ENCODE measurements at regions of chr18 and their contacts with region 1.

Region 1: GRCh38 chr18:7272311-7273049 is 41.6 kb downstream of the LRRC30 start:
- DNase-seq: peak; percentile 56
- H3K4me3 ChIP-seq: no peak overlapping the region
- H3K27ac ChIP-seq: no peak overlapping the region
- H3K4me1 ChIP-seq: peaks cover 5% of the 10 kb centered on the region
- H3K27me3 ChIP-seq: no peaks in the 10 kb centered on the region
- CTCF ChIP-seq: peak; percentile 55 to 73

Region 2: DNA sequence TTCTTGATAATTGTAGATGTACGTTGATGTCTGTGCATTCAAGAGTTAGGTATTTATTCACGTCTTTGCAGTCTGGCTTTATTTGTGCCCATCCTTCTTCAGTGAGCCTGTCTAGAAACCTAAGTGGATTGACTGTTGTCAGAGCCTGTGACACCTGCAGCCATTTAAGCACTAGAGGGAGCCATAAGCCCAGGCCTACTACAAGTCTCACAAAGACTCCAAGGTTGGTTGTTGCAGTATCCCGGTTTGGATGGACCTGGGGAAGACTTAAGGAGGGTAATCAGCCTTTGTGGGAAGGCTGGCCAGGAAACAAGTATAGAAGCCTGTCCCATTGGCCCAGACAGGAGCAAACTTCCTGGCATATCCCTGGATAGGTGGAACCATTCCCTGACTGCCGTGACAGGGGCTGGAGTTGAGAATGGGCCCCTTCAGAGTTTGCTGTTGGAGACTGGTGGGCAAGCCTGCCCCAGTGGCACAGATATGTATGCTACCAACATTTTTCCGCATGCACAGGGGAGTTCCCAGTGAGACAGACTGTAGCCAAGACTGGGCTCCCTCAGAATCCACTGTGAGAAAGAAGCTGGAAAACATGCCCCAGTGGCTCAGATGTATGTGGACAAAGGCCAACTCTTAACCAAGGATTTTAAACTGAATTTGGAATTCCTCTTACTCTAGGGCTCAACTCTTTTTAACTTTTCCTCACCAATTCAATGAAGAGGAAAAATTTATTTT is 50.9 kb before region 1 on chr18:
- CTCF ChIA-PET with region 1: no interaction called
- dilution Hi-C with region 1: no loop called
- in situ Hi-C with region 1: no loop called
- intact Hi-C with region 1: loop called (anchors 1 kb)
- DNase-seq: peak; percentile 58
- H3K4me3 ChIP-seq: no peak overlapping the region
- H3K27ac ChIP-seq: no peak overlapping the region
- H3K4me1 ChIP-seq: no peaks in the 10 kb centered on the region
- H3K27me3 ChIP-seq: no peaks in the 10 kb centered on the region
- CTCF ChIP-seq: peak; percentile 94 to 96

Region 3: GRCh38 chr18:7325126-7325430 is 52.6 kb after region 1 on chr18:
- CTCF ChIA-PET with region 1: no interaction called
- dilution Hi-C with region 1: no loop called
- in situ Hi-C with region 1: no loop called
- intact Hi-C with region 1: no loop called
- DNase-seq: peak; percentile 78
- H3K4me3 ChIP-seq: no peak overlapping the region
- H3K27ac ChIP-seq: no peak overlapping the region
- H3K4me1 ChIP-seq: peaks cover 28% of the 10 kb centered on the region
- H3K27me3 ChIP-seq: no peaks in the 10 kb centered on the region
- CTCF ChIP-seq: no peak

Region 4: DNA sequence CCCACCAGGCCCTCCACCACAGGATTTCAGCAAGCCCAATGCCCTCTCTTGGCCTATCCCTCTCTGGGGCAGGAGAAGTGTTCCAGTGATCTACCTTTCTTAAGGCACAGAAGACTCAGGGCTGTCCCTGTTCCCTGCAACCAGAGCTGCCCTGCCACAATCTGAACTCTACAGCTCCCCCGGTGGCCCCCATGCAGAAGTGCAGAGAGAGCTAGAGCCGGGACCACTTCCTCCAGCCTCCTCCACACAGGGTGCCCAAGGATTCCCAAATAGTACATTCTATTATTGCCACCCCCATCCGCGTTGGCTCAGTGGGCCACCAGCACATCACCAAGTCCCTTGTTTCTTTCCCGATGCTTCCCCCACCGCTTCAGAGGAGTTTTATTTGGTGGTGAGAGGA is 179.9 kb after region 1 on chr18:
- CTCF ChIA-PET with region 1: interaction called, 4 read pairs
- dilution Hi-C with region 1: no loop called
- in situ Hi-C with region 1: no loop called
- intact Hi-C with region 1: loop called (anchors 2 kb)
- DNase-seq: peak; percentile 26
- H3K4me3 ChIP-seq: no peak overlapping the region
- H3K27ac ChIP-seq: no peak overlapping the region
- H3K4me1 ChIP-seq: no peaks in the 10 kb centered on the region
- H3K27me3 ChIP-seq: no peaks in the 10 kb centered on the region
- CTCF ChIP-seq: peak; percentile 73

Region 5: DNA sequence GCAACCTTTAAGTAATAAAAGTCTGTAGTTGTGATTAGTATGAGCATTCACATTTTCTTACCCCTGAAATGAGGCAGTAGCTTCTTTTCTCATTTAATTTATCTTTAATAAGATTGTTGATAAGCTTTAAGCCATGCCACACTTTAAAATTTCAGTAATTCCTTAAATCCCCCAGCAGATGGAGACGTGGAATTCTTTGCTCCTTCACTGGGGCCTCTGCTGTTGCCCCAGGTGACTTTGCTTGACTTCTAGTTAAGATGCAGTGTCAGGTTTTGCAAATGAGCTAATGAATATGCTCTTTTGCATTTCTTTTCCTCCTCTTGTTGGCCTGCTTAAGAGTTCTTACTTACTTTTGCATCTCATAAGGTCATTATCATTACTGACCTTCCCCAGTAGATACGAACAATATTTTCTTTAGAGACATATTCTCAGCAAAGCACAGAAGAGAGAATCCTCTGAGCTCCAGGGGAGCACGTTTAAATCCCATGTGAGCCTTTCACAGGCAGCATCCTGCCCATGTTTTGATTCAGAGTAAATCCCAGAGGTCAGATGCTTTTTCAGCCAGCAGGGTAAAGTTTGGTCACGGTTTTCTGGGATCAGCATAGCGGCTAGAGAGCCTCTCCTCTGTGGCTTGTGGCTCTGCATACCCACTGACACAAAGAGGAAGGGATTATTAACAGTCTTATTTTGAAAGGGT is 517.5 kb after region 1 on chr18:
- CTCF ChIA-PET with region 1: interaction called, 6 read pairs
- dilution Hi-C with region 1: no loop called
- in situ Hi-C with region 1: no loop called
- intact Hi-C with region 1: loop called (anchors 10 kb)
- DNase-seq: peak; percentile 37
- H3K4me3 ChIP-seq: no peak overlapping the region
- H3K27ac ChIP-seq: no peak overlapping the region
- H3K4me1 ChIP-seq: no peaks in the 10 kb centered on the region
- H3K27me3 ChIP-seq: no peaks in the 10 kb centered on the region
- CTCF ChIP-seq: peak; percentile 50 to 68

Region 6: DNA sequence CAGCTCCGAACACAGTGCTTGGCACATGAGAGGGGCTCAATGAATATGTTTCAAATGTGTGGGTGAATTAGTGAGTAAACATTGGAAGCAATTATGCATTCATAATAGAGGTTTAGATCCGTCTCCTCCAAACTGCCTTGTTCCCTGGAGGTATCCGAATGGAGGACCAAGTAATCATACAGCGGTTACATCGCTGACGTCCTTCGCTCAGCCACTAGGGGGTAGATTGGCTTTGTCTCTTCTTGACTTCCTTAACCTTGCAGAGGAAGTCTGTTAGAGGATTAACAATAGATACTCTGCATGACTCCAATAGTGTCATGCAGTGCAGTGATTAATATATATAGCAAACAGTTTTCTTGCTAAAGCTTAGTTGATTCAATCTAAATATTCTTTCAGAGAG is 811.7 kb after region 1 on chr18:
- CTCF ChIA-PET with region 1: no interaction called
- dilution Hi-C with region 1: no loop called
- in situ Hi-C with region 1: no loop called
- intact Hi-C with region 1: loop called (anchors 5 kb)
- DNase-seq: peak; percentile 46
- H3K4me3 ChIP-seq: no peak overlapping the region
- H3K27ac ChIP-seq: no peak overlapping the region
- H3K4me1 ChIP-seq: no peaks in the 10 kb centered on the region
- H3K27me3 ChIP-seq: no peaks in the 10 kb centered on the region
- CTCF ChIP-seq: peak; percentile 66 to 70

Region 7: GRCh38 chr18:8478166-8478967 is 1205.9 kb after region 1 on chr18:
- CTCF ChIA-PET with region 1: interaction called, 8 read pairs
- dilution Hi-C with region 1: no loop called
- in situ Hi-C with region 1: no loop called
- intact Hi-C with region 1: loop called (anchors 1 kb)
- DNase-seq: peak; percentile 29
- H3K4me3 ChIP-seq: no peak overlapping the region
- H3K27ac ChIP-seq: no peak overlapping the region
- H3K4me1 ChIP-seq: no peaks in the 10 kb centered on the region
- H3K27me3 ChIP-seq: no peaks in the 10 kb centered on the region
- CTCF ChIP-seq: peak; percentile 94 to 95

Measured in mammary epithelial cell (primary cell).